ENCODE measurements at regions of chr2 and their contacts with region 1.

Region 1: DNA sequence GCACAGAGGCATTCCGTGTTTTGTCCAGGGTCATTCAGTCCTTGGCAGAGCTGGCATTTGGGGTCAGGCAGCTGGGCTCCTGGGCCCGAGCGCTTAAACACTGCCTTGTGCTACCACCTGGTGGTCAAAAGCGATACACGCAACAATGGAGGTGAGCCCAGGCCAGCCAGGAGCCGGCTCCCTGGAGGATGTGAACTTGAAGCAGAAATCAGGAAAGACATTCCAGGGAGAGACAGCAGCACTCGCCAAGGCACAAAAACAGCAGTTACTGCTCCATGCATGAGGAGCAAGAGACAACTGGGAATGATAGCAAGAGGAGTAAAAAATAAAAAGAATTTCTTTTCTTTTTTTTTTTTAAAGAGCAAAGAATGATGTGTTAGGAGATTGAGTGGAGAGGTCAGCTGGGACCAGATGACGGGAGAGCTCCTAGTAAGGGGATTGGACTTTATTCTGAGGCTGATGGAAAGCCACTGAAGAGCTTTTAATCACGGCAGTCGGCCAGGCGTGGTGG is 20.7 kb downstream of the SCYGR8 start:
- DNase-seq: peak; percentile 13 to 60 (median 45)
- ATAC-seq: peak; percentile 84
- H3K4me3 ChIP-seq: no peak overlapping the region
- H3K4me3 Mint-ChIP-seq: no peak overlapping the region
- H3K27ac ChIP-seq: no peak overlapping the region
- H3K27ac Mint-ChIP-seq: no peak overlapping the region
- H3K4me1 ChIP-seq: no peaks in the 10 kb centered on the region
- H3K4me1 Mint-ChIP-seq: peaks cover 0 to 3% (median 0%) of the 10 kb centered on the region in 7 donors
- H3K27me3 ChIP-seq: no peaks in the 10 kb centered on the region
- H3K27me3 Mint-ChIP-seq: peaks cover 0 to 5% (median 4%) of the 10 kb centered on the region in 5 donors

Region 2: DNA sequence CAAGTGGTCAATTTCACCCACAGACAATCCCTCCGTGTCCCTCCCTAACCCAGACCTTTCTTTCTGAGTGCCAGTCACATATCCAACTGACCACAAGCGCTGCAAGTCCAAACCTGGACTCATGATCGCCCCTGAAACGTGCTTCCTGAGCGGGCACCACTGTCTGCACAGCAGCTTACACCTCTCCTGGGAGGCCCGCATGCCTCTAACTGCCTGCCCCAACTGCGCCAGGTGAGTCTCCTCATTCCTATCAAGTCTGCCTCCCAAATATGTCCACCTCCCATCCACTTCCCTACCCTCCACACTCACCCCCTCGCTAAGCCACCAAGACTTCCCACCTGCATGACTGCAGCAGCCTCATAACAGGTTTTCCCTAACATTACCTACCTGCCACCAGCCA is 635.8 kb before region 1 on chr2:
- CTCF ChIA-PET with region 1: interaction called, 3 read pairs
- POLR2A ChIA-PET with region 1: no interaction called
- intact Hi-C with region 1: loop called (anchors 1 kb)
- DNase-seq: no peak
- ATAC-seq: no peak
- H3K4me3 ChIP-seq: no peak overlapping the region
- H3K4me3 Mint-ChIP-seq: no peak overlapping the region
- H3K27ac ChIP-seq: no peak overlapping the region
- H3K27ac Mint-ChIP-seq: no peak overlapping the region
- H3K4me1 ChIP-seq: no peaks in the 10 kb centered on the region
- H3K4me1 Mint-ChIP-seq: no peaks in the 10 kb centered on the region
- H3K27me3 ChIP-seq: no peaks in the 10 kb centered on the region
- H3K27me3 Mint-ChIP-seq: peaks cover 6 to 35% (median 15%) of the 10 kb centered on the region in 5 donors

Region 3: GRCh38 chr2:227406177-227407031 is 360.0 kb before region 1 on chr2:
- CTCF ChIA-PET with region 1: no interaction called
- POLR2A ChIA-PET with region 1: no interaction called
- intact Hi-C with region 1: loop called in 1 of 2 experiments (anchors 5 kb)
- DNase-seq: peak in 1 of 9 donors; percentile 5
- ATAC-seq: no peak
- H3K4me3 ChIP-seq: no peak overlapping the region
- H3K4me3 Mint-ChIP-seq: peak overlapping the region in 4 of 10 donors; percentile 5 to 41 (median 20)
- H3K27ac ChIP-seq: no peak overlapping the region
- H3K27ac Mint-ChIP-seq: peak overlapping the region in 5 of 9 donors; percentile 14 to 78 (median 56)
- H3K4me1 ChIP-seq: peaks cover 0 to 9% of the 10 kb centered on the region in 2 donors
- H3K4me1 Mint-ChIP-seq: peaks cover 10 to 36% (median 28%) of the 10 kb centered on the region in 7 donors
- H3K27me3 ChIP-seq: no peaks in the 10 kb centered on the region
- H3K27me3 Mint-ChIP-seq: no peaks in the 10 kb centered on the region

Region 4: GRCh38 chr2:227479865-227480475 is 286.5 kb before region 1 on chr2:
- CTCF ChIA-PET with region 1: interaction called, 4 read pairs
- POLR2A ChIA-PET with region 1: no interaction called
- intact Hi-C with region 1: loop called in 1 of 2 experiments (anchors 2 kb)
- DNase-seq: peak in 2 of 9 donors; percentile 12 to 14
- ATAC-seq: peak; percentile 71
- H3K4me3 ChIP-seq: no peak overlapping the region
- H3K4me3 Mint-ChIP-seq: peak overlapping the region in 8 of 10 donors; percentile 7 to 59 (median 32)
- H3K27ac ChIP-seq: peak overlapping the region; percentile 2
- H3K27ac Mint-ChIP-seq: peak overlapping the region; percentile 0 to 85 (median 26)
- H3K4me1 ChIP-seq: peaks cover 28 to 31% of the 10 kb centered on the region in 2 donors
- H3K4me1 Mint-ChIP-seq: peaks cover 44 to 98% (median 68%) of the 10 kb centered on the region in 7 donors
- H3K27me3 ChIP-seq: no peaks in the 10 kb centered on the region
- H3K27me3 Mint-ChIP-seq: no peaks in the 10 kb centered on the region

Measured in naive thymus-derived CD4-positive, alpha-beta T cell (primary cell).